BJ (cell line): ENCODE measurements at regions of chrX and their contacts with region 1.

Region 1: GRCh38 chrX:40877887-40878286 is 142.5 kb upstream of the MED14 start:
- DNase-seq: no peak
- H3K4me3 ChIP-seq: no peak overlapping the region
- H3K27me3 ChIP-seq: no peaks in the 10 kb centered on the region
- CTCF ChIP-seq: peak; percentile 45

Region 2: DNA sequence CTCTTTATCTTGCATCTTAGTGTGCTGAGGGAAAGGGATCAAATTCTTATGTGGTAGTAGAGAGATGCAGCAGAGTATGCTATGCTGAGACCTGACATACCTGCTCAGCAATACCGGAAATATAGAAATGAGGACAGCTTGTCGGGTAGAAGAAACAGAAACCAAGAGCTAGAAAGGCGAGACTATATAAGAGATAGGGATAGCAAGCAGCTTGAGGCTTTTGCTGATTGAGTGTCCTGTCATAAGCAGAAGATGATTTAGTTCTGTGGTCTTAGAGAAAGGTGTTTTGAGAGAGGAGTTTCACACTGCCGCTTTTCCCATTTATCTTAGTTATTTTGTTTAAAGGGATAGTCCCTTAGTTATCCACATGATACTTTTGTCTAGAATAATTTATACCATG is 239.1 kb after region 1 on chrX:
- CTCF ChIA-PET with region 1: interaction called, 10 read pairs
- POLR2A ChIA-PET with region 1: no interaction called
- DNase-seq: no peak
- H3K4me3 ChIP-seq: no peak overlapping the region
- H3K27me3 ChIP-seq: no peaks in the 10 kb centered on the region
- CTCF ChIP-seq: no peak